Activated CD4-positive, alpha-beta T cell treated with anti-CD3 and anti-CD28 coated beads, Interleukin-2, amount 10 ng/mL, durations not matched to agents 7 days and 5 days (primary cell): ENCODE measurements at regions of chr12 and their contacts with region 1.

Region 1: DNA sequence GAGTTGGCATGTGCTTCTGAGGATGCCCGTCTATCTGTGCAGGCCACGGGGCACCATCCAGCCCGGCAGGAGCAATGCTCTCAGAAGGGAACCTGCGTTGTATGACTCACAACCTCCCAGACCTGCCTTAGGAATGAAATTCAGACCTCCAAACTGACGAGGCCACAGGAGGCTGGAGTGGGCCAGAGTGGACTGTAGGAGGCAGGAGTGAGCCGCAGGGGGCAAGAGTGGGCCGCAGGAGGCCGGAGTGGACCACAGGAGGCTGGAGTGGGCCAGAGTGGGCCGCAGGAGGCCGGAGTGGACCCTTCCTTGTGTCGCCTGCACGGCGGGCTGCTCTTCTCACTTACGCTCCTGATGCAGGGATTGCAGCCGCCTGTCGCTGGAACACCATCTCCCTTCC is 11.1 kb upstream of the FBRSL1 start:
- DNase-seq: no peak
- H3K4me3 Mint-ChIP-seq: no peak overlapping the region
- H3K27ac Mint-ChIP-seq: no peak overlapping the region
- H3K4me1 Mint-ChIP-seq: peaks cover 27% of the 10 kb centered on the region
- H3K27me3 Mint-ChIP-seq: peaks cover 2% of the 10 kb centered on the region

Region 2: DNA sequence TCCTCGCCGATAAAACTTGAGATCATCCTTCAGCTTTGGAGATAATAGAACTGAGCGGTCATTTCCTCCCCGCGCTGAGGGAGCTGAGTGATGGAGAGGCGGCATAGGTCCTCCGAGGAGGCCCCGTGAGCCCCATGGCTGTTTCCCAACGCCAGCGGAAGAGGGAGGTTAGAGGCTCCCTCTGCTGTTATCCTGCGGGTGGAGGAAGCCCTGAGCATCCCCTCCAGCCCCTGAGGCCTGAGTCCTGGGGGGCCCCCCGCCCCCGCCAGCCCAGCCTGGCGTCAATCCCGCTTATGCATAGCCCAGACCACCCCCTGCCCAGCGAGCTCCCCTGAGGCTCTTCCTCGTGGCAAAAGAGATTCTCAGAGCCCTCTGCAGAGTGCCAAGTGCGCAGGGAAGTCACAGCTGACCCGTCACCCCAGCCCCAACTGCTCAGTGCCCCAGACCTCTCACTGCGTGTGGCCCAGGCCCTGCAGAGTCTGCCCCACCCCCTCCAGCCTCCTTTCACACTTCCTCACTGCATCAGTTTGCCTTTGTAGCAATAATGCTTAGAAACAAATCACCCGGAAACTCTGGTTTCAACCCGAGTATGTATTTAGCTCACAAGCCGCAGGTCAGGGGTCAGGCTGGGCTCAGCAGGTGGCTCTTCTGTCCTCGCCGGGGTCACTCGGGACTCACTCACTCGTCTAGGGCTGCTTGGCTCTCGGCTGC is 104.8 kb before region 1 on chr12:
- CTCF ChIA-PET with region 1: no interaction called
- POLR2A ChIA-PET with region 1: no interaction called
- DNase-seq: no peak
- H3K4me3 Mint-ChIP-seq: no peak overlapping the region
- H3K27ac Mint-ChIP-seq: no peak overlapping the region
- H3K4me1 Mint-ChIP-seq: no peaks in the 10 kb centered on the region
- H3K27me3 Mint-ChIP-seq: peaks cover 30% of the 10 kb centered on the region

Region 3: DNA sequence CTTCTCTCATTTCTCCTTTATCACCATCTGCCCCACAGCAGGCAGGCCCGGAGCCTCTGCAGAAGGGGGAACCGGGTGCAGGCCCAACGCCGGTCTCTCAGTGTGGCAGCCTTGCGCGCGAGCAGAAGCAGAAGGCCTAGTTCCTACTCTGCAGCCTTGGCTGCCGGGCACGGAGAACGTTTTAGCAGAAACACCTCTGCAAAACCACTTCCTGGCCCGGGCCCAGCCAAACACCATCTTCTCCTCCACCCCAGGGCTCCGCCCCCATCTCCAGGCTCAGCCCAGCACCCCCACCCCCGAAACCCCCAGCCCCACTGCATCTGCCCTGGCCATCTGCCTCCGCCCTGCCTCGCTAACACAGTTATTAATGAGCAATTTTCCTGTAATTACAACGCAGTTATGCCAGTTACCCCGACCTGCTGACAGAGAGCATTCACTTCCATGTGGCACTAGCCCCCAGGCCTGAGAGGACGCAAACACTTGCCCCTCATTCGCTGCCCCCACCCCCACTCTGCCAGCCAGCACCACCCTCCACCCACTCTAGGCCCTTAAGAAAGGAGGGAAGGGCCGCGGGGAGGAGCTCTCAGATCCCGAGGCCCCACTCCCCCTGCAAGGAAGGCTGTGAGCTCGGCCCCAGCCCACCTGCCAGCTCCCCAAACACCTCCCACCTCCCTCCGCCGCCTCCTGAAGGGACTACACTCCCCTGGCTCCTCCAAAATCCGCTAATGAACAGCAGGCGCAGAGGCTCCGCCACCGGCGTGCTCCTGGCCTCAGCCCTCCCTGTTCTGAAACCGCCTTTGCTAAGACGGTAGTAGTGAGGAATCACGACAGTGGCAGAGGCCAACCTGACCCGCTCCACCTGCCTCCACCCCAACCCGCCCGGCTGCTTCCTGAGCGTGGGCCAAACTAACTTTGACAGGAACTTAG is 33.6 kb before region 1 on chr12:
- CTCF ChIA-PET with region 1: no interaction called
- POLR2A ChIA-PET with region 1: no interaction called
- DNase-seq: peak; percentile 88
- H3K4me3 Mint-ChIP-seq: peak overlapping the region; percentile 77
- H3K27ac Mint-ChIP-seq: peak overlapping the region; percentile 99
- H3K4me1 Mint-ChIP-seq: peaks cover 62% of the 10 kb centered on the region
- H3K27me3 Mint-ChIP-seq: no peaks in the 10 kb centered on the region

Region 4: GRCh38 chr12:132489078-132489601 is 10.3 kb after region 1 on chr12:
- CTCF ChIA-PET with region 1: interaction called, 13 read pairs
- POLR2A ChIA-PET with region 1: interaction called, 4 read pairs
- DNase-seq: peak; percentile 67
- H3K4me3 Mint-ChIP-seq: peak overlapping the region; percentile 86
- H3K27ac Mint-ChIP-seq: peak overlapping the region; percentile 98
- H3K4me1 Mint-ChIP-seq: peaks cover 58% of the 10 kb centered on the region
- H3K27me3 Mint-ChIP-seq: no peaks in the 10 kb centered on the region